ENCODE measurements at regions of chr14 and their contacts with region 1.

Region 1: GRCh38 chr14:54893151-54893760 is 9.4 kb downstream of the GCH1 start:
- DNase-seq: no peak
- H3K4me3 ChIP-seq: no peak overlapping the region
- H3K27me3 ChIP-seq: no peaks in the 10 kb centered on the region; the same call in 1 of the 2 replicates
- CTCF ChIP-seq: peak; percentile 80

Region 2: GRCh38 chr14:54683882-54684794 is 209.1 kb before region 1 on chr14:
- CTCF ChIA-PET with region 1: no interaction called
- POLR2A ChIA-PET with region 1: no interaction called
- DNase-seq: peak; percentile 84
- H3K4me3 ChIP-seq: no peak overlapping the region
- H3K27me3 ChIP-seq: no peaks in the 10 kb centered on the region
- CTCF ChIP-seq: no peak

Region 3: DNA sequence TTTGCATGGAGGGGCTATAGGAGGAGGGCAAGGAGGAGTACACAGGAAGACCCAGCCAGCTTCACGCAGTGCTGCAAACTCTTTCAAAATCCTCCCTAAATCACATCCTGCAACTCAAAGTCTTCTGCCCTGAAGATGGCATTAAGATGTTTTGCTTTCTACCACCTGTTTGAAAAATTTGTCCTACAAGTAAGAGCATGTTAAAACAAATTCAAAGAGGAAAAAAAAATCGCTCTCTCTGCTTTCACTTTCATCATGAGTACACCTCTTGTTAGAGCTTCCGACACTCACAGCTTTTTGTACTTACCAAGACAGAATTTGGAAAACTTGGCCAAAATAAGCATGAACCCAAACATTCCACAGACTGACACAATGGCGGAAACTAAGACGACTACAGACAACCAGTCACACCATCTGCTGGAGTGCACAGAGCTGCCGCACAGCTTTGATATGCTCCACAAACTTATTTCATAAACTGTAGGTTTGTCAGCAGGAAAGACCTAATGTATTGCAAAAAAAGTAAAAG is 12.0 kb before region 1 on chr14:
- CTCF ChIA-PET with region 1: interaction called, 10 read pairs
- POLR2A ChIA-PET with region 1: no interaction called
- DNase-seq: no peak
- H3K4me3 ChIP-seq: peak overlapping the region; percentile 31
- H3K27me3 ChIP-seq: no peaks in the 10 kb centered on the region
- CTCF ChIP-seq: no peak

Region 4: DNA sequence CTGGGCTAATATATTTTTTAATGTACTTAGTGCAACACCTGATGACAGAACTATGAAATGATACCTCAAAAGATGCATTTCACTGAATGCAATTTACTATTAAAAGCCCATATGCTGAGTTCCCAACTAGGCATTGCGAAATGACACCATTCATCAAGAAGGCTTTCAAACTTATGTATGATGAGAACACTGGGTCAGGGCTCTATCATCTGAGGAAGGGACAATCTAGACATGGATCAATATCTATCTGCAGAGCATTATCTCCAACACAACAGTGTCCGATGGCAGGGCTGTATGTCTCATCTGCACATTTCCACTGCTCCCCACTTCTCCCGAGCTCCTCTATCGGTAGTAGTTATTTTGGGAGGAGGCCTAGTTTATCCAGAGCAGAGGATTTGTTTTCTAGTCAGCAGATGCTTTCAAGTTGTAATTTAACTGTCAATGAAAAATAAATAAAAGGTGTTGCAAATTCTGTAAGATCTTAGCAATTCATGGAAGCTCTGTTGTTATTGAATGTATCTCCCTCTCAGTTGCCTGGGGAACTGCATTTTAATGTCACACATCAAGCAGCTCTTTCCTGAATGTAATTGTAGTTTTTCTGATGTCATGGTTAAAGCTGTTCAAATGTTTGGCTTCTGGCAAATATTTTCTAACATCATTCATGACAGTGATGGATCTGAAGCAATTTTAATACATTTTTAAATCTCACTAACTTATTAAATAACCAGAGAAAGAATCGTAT is 16.7 kb after region 1 on chr14:
- CTCF ChIA-PET with region 1: no interaction called
- POLR2A ChIA-PET with region 1: no interaction called
- DNase-seq: no peak
- H3K4me3 ChIP-seq: no peak overlapping the region
- H3K27me3 ChIP-seq: no peaks in the 10 kb centered on the region; the same call in 1 of the 2 replicates
- CTCF ChIP-seq: no peak

Region 5: GRCh38 chr14:54981698-54982097 is 88.4 kb after region 1 on chr14:
- CTCF ChIA-PET with region 1: no interaction called
- POLR2A ChIA-PET with region 1: no interaction called
- DNase-seq: no peak
- H3K4me3 ChIP-seq: no peak overlapping the region
- H3K27me3 ChIP-seq: no peaks in the 10 kb centered on the region
- CTCF ChIP-seq: peak; percentile 20; the same call in 1 of the 2 replicates

Measured in BJ (cell line).